ENCODE measurements at regions of chr1 and their contacts with region 1.

Region 1: DNA sequence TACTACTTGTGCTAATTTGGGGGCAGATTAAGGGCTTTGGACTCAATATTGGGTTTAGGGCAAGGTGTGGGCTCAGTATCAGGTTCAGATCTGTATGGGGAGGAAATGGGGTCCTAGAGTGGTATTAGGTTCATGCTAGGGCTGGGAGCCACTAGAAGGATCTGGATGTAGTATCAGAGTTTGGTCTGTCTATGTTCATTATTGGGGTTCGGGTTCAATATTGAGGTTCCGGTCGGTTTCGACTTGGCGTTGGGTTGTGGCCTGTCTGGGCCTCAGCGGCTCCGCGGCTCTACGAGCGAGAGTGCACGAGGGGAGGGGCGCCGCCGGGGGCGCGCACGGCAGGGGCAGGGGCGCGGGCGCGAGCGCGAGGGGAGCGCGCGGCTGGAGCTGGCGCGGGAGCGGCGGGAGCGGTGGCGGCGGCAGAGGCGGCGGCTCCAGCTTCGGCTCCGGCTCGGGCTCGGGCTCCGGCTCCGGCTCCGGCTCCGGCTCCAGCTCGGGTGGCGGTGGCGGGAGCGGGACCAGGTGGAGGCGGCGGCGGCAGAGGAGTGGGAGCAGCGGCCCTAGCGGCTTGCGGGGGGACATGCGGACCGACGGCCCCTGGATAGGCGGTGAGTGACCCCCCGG is at the start of gene PTPRF:
- DNase-seq: peak; percentile 63 to 78
- H3K4me3 ChIP-seq: peak within 1 kb of the TSS; percentile 68 to 86
- H3K27ac ChIP-seq: peak within 1 kb of the TSS; percentile 80 to 91
- H3K4me1 ChIP-seq: no peaks in the 10 kb centered on the region
- H3K27me3 ChIP-seq: no peaks in the 10 kb centered on the region
- CTCF ChIP-seq: peak in 1 of 4 experiments; percentile 12
- POLR2A ChIP-seq: peak in 1 of 2 donors; percentile 68
- total RNA-seq, gene PTPRF: 24.7 to 172 (median 124) TPM

Region 2: DNA sequence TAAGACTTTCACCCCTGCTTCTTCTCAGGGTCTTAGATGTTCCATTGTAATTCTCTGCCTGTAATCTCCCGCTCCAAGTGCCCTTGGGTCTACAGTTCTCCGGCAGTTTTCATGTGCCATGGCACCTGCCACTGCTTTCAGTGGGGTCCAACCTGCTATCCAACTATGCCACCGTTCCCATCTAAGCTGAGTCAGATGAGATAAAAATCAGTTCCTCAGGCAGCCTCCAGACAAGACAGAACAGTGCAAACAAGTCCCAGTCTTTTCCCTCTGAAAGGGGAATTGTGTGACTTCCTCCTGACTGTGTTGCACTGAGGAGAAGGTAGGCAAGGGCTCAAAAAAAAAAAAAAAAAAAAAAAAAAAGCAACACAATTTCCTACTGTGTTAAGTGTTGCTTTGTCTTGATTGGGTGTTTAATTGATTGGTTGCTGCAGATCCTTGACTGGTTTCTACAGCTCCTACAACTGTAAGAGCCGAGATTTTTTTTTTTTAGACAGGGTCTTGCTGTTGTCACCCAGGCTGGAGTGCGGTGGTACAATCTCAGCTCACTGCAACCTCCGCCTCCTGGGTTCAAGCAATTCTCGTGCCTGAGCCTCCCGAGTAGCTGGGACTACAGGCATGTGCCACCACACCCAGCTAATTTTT is 409.2 kb before region 1 on chr1:
- intact Hi-C with region 1: no loop called
- DNase-seq: no peak
- H3K4me3 ChIP-seq: no peak overlapping the region
- H3K27ac ChIP-seq: no peak overlapping the region
- H3K4me1 ChIP-seq: no peaks in the 10 kb centered on the region
- H3K27me3 ChIP-seq: no peaks in the 10 kb centered on the region
- CTCF ChIP-seq: no peak
- POLR2A ChIP-seq: no peak

Region 3: DNA sequence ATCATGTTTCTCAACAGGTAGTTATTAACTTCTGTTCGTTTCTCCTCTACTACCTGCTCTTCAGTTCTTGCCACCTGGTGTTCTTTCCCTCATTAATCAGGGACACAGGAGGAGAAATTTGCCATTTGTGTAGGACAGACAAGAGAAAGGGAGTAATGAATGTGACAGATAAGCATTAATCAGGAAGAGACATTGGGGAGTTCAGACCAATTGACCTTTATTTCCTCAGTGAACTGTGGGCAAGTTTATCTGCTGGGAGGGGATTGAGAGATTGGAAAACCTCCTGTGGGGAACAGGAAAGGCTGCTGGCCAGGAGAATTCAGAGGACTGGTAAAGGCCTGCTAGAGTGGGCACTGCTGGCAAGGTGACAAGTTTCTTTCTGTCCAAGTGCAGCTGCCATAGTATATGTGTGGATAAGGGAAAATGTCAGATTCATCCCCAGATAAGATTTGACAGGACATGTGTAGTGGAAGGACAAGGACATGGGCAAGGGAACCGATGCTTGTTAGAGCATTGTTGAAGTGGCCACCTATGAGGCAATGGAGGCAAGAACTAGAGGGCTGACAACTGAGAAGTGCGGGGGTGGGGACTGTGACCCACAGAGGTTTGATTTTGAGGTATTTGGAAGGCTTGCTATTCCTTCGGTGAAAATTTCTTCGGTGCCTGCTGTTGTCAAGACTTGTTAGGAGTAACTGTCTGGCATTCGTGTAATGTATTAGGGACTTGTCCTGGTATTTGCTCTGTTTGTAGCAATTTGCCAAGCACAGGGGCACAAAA is 128.3 kb before region 1 on chr1:
- intact Hi-C with region 1: no loop called
- DNase-seq: no peak
- H3K4me3 ChIP-seq: no peak overlapping the region
- H3K27ac ChIP-seq: no peak overlapping the region
- H3K4me1 ChIP-seq: no peaks in the 10 kb centered on the region
- H3K27me3 ChIP-seq: no peaks in the 10 kb centered on the region
- CTCF ChIP-seq: no peak
- POLR2A ChIP-seq: no peak

Region 4: DNA sequence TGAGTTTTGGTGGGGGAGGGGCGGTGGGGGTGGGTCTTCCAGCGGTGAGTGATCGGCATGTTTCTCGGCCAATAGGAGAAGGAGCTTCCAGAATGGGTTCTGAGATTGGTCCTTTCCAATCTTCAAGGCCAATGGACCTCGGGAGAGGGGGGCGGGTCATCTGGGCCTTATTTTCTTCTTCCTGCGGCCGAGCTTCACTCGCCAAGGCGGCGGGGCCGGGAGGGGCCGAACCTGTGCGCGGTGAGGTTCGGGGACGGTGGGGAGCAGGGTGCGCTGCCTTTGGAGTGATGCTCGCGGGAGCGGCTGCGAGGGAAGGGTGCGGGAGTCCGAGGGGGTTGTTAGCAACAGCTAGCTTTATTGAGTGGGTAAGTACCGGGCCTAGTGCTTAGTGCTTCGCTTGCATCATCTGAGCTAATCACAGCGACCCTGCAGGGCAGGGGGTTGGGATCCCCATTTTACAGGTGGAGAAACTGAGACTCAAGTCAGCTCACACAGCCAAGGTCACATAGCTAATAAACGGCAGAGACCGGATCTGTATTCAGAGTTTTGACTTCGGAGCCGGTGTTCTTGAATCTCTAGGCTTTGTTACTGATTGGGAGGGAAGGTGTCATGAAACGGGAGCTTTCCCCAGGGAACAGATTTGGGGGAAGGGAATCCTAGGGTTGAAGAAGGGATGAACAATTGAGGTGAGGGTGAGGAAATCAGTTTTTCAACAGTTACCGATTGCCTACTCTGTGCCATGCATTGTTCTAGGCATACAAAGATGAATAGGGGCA is 119.9 kb after region 1 on chr1:
- intact Hi-C with region 1: loop called (anchors 5 kb)
- DNase-seq: peak; percentile 91 to 99
- H3K4me3 ChIP-seq: peak overlapping the region; percentile 68 to 91
- H3K27ac ChIP-seq: peak overlapping the region; percentile 97 to 99
- H3K4me1 ChIP-seq: peaks cover 0 to 7% of the 10 kb centered on the region in 2 donors
- H3K27me3 ChIP-seq: no peaks in the 10 kb centered on the region
- CTCF ChIP-seq: no peak
- POLR2A ChIP-seq: peak; percentile 82 to 87

Region 5: DNA sequence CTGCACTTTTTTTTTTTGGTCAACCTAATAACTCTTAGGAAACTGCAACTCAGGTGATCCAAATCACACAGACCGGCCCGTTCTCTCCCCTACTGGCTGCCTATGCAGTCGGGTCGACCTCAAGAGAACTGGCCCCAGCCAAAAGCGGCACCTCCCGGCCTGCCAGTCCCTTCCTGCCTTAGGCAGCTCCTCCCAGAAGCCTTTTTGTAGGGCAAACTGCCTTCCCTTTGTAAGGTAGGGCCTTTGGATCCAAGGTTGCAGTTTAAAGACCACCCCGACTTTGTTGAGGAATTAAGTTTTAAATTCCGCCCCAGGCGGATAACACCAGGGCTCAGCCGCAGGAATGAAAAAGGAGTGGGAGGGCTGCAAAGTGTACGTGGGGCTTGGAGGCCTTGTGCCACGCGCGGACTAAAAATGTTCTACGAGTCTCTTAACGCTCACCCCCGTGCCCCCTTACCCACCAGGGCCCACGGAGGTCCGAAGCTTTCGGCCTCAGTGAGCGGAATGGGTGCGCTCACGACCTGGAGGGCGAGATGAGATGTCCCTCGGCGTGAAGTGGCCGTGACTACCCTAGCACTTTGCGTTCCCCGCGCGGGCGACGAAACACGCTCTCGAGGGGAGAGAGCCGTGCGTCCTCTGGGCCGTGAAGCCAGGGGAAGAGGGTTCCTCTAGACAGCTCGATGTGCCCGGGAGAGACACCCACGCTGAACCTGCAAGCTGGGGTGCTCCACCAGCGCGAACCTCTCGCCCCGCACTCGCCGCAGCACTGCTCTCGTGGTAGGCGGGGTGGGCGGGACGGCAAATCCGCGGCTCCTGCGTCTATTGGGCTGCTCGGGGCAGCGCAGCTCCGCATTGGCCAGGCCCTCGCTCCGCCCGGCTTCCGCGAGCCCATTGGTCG is 176.3 kb after region 1 on chr1:
- intact Hi-C with region 1: no loop called
- DNase-seq: peak; percentile 87 to 89
- H3K4me3 ChIP-seq: peak overlapping the region; percentile 59 to 88
- H3K27ac ChIP-seq: peak overlapping the region; percentile 35 to 59
- H3K4me1 ChIP-seq: peaks cover 0 to 3% of the 10 kb centered on the region in 2 donors
- H3K27me3 ChIP-seq: no peaks in the 10 kb centered on the region
- CTCF ChIP-seq: no peak
- POLR2A ChIP-seq: no peak